Activated CD4-positive, alpha-beta T cell treated with anti-CD3 and anti-CD28 coated beads, Interleukin-2, amount 10 ng/mL, durations not matched to agents 7 days and 5 days (primary cell): ENCODE measurements at regions of chr2 and their contacts with region 1.

Region 1: GRCh38 chr2:143121957-143122356 is 7.3 kb upstream of the ARHGAP15 start:
- DNase-seq: no peak
- H3K4me3 Mint-ChIP-seq: no peak overlapping the region
- H3K27ac Mint-ChIP-seq: no peak overlapping the region
- H3K4me1 Mint-ChIP-seq: peaks cover 15% of the 10 kb centered on the region
- H3K27me3 Mint-ChIP-seq: no peaks in the 10 kb centered on the region

Region 2: DNA sequence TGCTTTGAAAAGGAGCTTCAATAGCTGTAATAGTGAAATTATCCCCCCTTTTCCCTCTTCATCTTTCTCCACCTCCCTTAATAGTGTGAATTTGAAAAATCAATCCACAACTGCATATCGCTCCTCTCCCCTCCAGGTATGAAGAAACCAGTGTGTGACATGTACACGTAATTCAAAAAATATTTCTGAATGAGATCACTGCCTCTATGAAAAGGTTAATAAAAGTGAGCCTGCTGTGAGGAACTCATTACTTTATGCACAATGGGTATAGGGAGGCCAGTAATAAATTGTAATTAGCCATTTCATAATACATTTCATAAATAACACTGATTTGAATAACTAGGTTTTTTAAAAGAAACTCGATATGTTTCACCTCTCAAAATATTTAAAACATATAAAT is 453.5 kb before region 1 on chr2:
- CTCF ChIA-PET with region 1: no interaction called
- POLR2A ChIA-PET with region 1: no interaction called
- DNase-seq: no peak
- H3K4me3 Mint-ChIP-seq: no peak overlapping the region
- H3K27ac Mint-ChIP-seq: no peak overlapping the region
- H3K4me1 Mint-ChIP-seq: no peaks in the 10 kb centered on the region
- H3K27me3 Mint-ChIP-seq: no peaks in the 10 kb centered on the region

Region 3: DNA sequence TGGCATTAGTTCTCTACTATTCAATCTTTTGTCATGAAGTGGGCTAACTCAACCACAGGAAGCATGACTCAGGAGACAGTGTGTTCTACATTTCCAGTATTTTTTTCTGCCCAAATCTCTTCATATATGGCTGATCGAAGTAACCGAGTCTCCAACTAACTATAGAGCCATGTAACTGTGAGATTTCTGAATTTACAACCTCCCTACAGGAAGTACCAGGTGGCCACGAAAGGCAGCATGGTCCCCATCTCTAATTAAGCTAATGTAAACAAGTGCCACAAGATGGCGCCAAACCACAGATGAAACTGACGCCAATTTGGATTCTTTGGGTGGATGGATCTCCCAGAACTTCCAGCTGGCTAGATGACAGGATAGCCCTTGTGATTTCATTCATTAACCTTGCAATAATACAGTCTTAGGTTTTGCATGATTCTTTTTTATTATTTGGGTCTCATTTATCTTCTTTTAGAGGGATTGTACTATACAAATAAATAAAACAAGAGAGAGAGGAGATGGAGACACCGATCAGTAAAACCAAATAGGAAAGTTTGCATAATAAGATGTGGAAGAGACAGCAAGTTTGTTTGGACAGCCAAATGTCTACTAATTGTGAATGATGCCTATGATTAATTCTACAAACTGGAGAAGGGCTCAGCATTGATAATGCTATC is 11.1 kb before region 1 on chr2:
- CTCF ChIA-PET with region 1: interaction called, 31 read pairs
- POLR2A ChIA-PET with region 1: no interaction called
- DNase-seq: peak; percentile 81
- H3K4me3 Mint-ChIP-seq: peak overlapping the region; percentile 56
- H3K27ac Mint-ChIP-seq: peak overlapping the region; percentile 87
- H3K4me1 Mint-ChIP-seq: peaks cover 42% of the 10 kb centered on the region
- H3K27me3 Mint-ChIP-seq: peaks cover 1% of the 10 kb centered on the region